ENCODE measurements at regions of chr2 and their contacts with region 1.

Region 1: DNA sequence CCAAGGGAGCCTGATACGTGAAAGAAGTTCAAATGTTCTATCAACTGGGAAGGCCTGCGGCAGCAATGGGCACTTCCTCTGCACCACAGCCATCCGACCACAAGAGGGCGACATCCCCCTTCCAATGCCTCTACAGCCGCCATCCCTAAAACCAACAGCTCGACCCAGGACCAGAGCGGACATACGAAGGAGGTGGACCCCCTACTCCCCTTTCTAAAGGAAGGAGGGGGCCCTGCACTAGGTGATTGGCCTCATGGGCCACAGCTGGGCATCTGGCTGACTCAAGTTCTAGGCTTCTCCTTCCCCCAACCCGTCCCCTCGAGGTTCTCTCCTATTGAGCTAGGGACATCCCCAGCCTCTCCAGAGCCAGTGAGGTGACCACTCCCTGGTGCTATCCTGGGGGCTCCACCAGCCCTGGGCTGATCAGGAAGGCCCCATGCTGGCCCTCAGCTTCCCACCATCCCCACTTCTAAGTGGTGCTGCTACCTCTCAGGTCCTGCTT is 217.2 kb downstream of the TNS1 start:
- DNase-seq: peak in 1 of 2 donors; percentile 80
- ATAC-seq: peak; percentile 84

Region 2: DNA sequence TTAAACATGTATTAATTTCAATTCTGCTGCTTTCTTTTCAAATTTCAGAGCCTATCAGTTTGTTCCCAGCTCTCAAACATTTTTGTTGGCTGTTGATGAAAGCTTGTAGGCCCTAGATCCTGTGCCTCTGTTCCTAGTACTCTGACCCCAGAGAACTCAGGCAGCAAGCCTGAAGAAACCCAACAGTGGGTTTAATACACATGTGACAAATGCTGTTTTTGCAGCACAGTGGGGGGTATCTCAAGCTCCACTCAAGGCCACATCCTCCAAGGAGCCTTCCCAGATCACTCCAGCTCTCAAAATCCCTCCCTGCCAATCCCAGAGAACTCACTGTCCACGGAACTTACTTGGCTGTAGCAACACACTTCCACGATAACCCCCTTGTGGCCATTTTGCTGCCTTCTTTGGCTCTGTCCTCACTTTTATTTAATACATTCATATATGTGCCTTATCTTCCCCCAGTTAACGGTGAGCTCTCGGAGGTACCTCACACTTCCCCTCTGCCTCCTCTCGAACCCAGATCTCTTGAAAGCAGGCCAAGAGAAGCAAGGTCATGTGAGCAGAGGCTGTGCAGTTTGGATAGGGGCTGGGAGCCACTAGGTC is 94.8 kb after region 1 on chr2:
- intact Hi-C with region 1: loop called (anchors 5 kb)
- DNase-seq: no peak
- ATAC-seq: no peak

Region 3: GRCh38 chr2:217886720-217887309 is 101.2 kb after region 1 on chr2:
- intact Hi-C with region 1: loop called (anchors 5 kb)
- DNase-seq: peak; percentile 55 to 69
- ATAC-seq: peak; percentile 73

Region 4: GRCh38 chr2:217988014-217988839 is 202.6 kb after region 1 on chr2:
- intact Hi-C with region 1: loop called (anchors 2 to 10 kb)
- DNase-seq: peak; percentile 86 to 88
- ATAC-seq: peak; percentile 98

Region 5: DNA sequence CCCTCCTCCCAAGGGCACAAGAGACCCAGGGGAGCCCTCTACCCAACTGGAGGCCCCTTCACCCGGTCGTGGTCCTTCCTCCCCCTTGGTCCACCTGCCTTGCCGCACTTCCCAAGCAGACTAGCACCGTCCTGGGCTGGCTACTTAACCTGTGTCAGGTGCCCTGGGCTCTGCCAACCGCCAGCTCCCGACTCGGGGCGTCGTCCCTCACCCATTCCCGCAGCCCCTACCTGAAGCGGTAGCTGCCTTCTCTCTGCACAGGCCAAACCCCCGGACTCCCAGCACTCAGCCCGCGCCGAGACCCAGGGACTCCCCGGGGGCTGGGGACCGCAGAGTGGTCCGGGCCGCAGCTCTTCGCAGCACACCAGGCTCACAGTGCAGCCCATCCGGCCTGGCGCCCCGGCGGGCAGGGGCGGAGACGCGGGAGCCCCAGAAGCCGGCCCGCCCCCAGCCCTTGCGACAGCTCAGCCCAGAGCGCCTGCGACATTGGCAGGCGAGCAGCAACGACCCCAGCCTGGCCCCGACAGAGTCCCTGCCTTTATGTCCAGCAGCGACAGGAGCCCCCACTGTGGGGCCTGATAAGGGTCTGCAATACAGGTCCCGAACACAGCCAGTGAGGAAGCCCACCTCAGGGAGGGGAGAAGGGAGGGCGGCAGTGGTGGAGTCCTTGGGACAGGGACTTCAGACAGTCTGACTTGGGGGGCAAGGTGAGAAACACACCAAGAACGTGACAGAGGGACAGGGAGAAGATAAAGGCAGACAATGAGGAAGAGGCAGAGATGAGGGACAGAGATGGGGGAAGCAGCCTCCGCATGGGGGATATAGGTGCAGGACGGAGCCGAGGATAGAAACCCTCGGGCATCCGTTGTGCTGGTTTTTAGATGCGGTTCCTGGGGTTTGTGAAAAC is 248.2 kb after region 1 on chr2:
- intact Hi-C with region 1: loop called in 1 of 2 experiments (anchors 5 kb)
- DNase-seq: no peak
- ATAC-seq: no peak